Activated CD4-positive, alpha-beta T cell treated with anti-CD3 and anti-CD28 coated beads for 36 hours (primary cell): ENCODE measurements at regions of chr12 and their contacts with region 1.

Region 1: DNA sequence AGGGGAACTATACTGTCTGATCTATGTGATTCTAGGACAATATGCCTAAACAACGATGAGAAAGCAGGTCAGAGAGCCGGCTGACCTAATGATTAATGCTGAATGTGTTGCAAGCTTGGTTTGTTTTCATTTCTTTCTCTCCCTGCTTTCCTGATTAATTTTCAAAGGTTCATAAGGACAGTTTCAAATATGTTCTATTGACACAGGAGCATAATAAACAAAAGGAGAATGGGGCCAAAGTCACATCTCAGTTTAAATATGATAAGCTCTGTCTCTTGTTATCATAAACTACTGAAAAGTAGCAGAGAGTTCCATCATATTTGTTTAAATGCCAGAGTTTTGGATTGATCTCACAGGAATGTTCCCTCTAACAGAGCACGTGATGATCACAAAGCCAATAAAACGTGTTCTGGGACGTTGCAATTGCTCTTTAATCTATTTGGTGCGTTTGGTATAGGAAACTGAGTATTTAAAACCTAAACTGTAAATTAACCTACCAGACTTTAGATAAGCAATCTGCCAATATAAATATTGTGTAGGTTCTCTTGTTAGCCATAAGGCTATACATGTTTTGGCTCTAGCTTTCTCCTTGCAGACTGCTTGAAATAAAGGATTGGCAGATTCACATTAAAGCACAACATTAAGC is 3.7 kb upstream of the HSD17B6 start:
- DNase-seq: no peak
- ATAC-seq: no peak
- H3K4me3 Mint-ChIP-seq: no peak overlapping the region
- H3K27ac Mint-ChIP-seq: no peak overlapping the region
- H3K4me1 Mint-ChIP-seq: peaks cover 10% of the 10 kb centered on the region
- H3K27me3 Mint-ChIP-seq: no peaks in the 10 kb centered on the region

Region 2: GRCh38 chr12:56839915-56840325 is 80.5 kb after region 1 on chr12:
- CTCF ChIA-PET with region 1: interaction called, 4 read pairs
- POLR2A ChIA-PET with region 1: no interaction called
- intact Hi-C with region 1: loop called in 1 of 2 experiments (anchors 5 kb)
- DNase-seq: peak; percentile 66
- ATAC-seq: no peak
- H3K4me3 Mint-ChIP-seq: no peak overlapping the region
- H3K27ac Mint-ChIP-seq: no peak overlapping the region
- H3K4me1 Mint-ChIP-seq: peaks cover 16% of the 10 kb centered on the region
- H3K27me3 Mint-ChIP-seq: no peaks in the 10 kb centered on the region

Region 3: GRCh38 chr12:57096099-57096572 is 336.8 kb after region 1 on chr12:
- CTCF ChIA-PET with region 1: no interaction called
- POLR2A ChIA-PET with region 1: no interaction called
- intact Hi-C with region 1: no loop called
- DNase-seq: no peak
- ATAC-seq: no peak
- H3K4me3 Mint-ChIP-seq: no peak overlapping the region
- H3K27ac Mint-ChIP-seq: peak overlapping the region; percentile 32
- H3K4me1 Mint-ChIP-seq: peaks cover 50% of the 10 kb centered on the region
- H3K27me3 Mint-ChIP-seq: no peaks in the 10 kb centered on the region